Activated CD4-positive, alpha-beta T cell treated with anti-CD3 and anti-CD28 coated beads, Interleukin-2, amount 10 ng/mL, durations not matched to agents 7 days and 5 days (primary cell): ENCODE measurements at regions of chr2 and their contacts with region 1.

Region 1: GRCh38 chr2:201118121-201118960 is 2.4 kb downstream of the CFLAR start:
- DNase-seq: peak; percentile 90
- H3K4me3 Mint-ChIP-seq: peak overlapping the region; percentile 91
- H3K27ac Mint-ChIP-seq: peak overlapping the region; percentile 97
- H3K4me1 Mint-ChIP-seq: peaks cover 64% of the 10 kb centered on the region
- H3K27me3 Mint-ChIP-seq: no peaks in the 10 kb centered on the region

Region 2: GRCh38 chr2:200888704-200889625 is 229.4 kb before region 1 on chr2 and contains the starts of genes NIF3L1 and PPIL3:
- CTCF ChIA-PET with region 1: interaction called, 12 read pairs
- POLR2A ChIA-PET with region 1: interaction called, 8 read pairs
- DNase-seq: peak; percentile 98
- H3K4me3 Mint-ChIP-seq: peak within 1 kb of the TSS; percentile 97
- H3K27ac Mint-ChIP-seq: peak within 1 kb of the TSS; percentile 99
- H3K4me1 Mint-ChIP-seq: peaks cover 52% of the 10 kb centered on the region
- H3K27me3 Mint-ChIP-seq: no peaks in the 10 kb centered on the region
- total RNA-seq, gene NIF3L1: 32.5 to 37.1 TPM
- total RNA-seq, gene PPIL3: 42.6 to 47.7 TPM